Psoas muscle (tissue), 8 donors: ENCODE measurements at regions of chr15 and their contacts with region 1.

Region 1: DNA sequence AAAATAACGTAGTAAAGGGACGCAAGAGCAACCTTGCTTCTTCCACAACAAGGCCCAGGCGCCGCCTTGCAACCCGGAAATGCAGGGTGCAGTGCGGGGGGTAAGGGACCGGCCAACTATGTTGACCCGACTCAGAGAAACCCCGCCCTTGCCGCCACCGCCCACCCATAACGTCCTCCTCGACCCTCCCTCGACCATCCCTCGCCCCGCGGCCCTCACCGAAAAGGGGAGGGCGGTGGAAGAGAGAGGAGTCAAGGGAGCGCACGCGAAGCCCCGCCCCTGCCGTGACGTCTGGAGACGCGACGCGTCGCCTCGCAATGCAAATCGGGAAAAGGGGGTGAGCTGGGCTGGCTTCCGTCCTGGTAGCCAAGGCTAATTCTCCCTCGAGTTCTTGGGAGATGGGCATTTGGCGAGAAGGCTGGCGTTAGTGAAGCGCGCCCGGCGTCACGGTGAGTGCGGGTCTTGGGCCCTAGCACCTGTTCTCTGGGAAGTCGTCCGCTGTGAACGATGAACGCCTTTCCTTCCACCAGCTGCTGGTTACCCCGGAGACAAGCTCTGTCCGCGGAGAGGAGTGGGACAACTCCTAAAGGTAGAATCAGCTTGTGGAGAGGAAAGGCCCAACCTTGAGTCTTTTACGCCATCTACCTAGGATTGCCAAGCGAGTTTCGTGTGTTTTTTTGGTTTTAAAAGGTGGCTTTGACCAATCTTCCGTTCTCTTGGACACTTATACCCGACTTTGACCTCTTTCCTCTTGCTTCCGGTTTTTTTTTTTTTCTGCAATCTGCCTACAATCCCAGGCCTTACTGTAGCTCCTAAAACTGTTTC is at the start of gene USP8:
- DNase-seq: peak; percentile 96 to 98
- ATAC-seq: peak; percentile 98 to 99 (median 99)
- H3K4me3 ChIP-seq: peak within 1 kb of the TSS; percentile 92
- H3K27ac ChIP-seq: peak within 1 kb of the TSS; percentile 92
- H3K4me1 ChIP-seq: peaks cover 15% of the 10 kb centered on the region
- H3K27me3 ChIP-seq: no peaks in the 10 kb centered on the region
- CTCF ChIP-seq: no peak
- total RNA-seq, gene USP8: 28.8 to 42.9 (median 34.8) TPM

Region 2: DNA sequence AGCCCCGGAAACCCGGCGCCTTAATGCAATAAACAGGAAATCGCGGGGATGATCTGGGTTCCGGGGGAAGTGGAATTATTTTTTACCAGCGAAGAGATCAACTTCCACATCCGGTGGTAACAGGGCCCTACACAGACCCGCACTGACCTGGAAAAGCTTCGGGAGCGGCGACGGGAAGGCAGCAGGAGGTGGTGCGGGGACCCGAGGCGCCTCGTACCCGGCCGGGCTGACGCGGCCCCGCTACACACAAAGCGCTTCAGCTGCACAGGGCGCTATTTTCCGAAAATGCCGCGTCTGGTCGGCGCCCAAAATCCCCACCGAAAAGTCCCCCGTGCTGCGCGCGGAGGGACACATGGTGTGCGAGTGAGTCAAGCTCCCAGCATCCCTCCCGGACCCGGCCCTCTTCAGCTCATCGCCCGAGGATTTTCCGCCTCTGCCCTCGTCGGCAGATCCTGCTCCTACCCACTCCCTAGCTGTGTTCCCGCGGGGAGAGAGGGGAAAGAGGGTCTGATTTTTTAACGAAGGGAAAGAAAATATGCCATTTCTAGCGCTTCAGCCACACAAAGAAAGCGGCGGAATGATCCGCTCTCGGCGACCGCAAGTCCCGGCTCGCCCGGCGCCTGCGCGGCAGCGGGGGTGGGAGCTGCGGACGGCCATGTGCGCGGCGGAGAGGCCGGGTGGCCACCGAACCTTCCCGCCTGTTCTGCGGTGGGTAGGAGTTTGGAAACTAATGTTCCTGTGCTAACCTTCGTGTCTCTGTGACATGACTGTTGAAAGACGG is 69.2 kb before region 1 on chr15 and contains the start of gene GABPB1:
- intact Hi-C with region 1: loop called (anchors 1 to 5 kb)
- DNase-seq: peak; percentile 90 to 94
- ATAC-seq: peak; percentile 84 to 90 (median 88)
- H3K4me3 ChIP-seq: peak within 1 kb of the TSS; percentile 97
- H3K27ac ChIP-seq: peak within 1 kb of the TSS; percentile 100
- H3K4me1 ChIP-seq: peaks cover 39% of the 10 kb centered on the region
- H3K27me3 ChIP-seq: no peaks in the 10 kb centered on the region
- CTCF ChIP-seq: no peak
- total RNA-seq, gene GABPB1: 5.1 to 16.7 (median 9.3) TPM